Esophagus muscularis mucosa (tissue), 4 donors: ENCODE measurements at regions of chrX and their contacts with region 1.

Region 1: GRCh38 chrX:41259516-41259915 is 74.4 kb upstream of the DDX3X start:
- DNase-seq: no peak
- H3K4me3 ChIP-seq: no peak overlapping the region
- H3K27ac ChIP-seq: no peak overlapping the region
- H3K4me1 ChIP-seq: no peaks in the 10 kb centered on the region
- H3K27me3 ChIP-seq: peaks cover 0 to 6% (median 0%) of the 10 kb centered on the region in 4 donors
- CTCF ChIP-seq: no peak
- EP300 ChIP-seq: no peak
- POLR2A ChIP-seq: no peak

Region 2: GRCh38 chrX:41180194-41180908 is 79.2 kb before region 1 on chrX:
- intact Hi-C with region 1: loop called (anchors 10 kb)
- DNase-seq: no peak
- H3K4me3 ChIP-seq: no peak overlapping the region
- H3K27ac ChIP-seq: no peak overlapping the region
- H3K4me1 ChIP-seq: peaks cover 0 to 11% (median 7%) of the 10 kb centered on the region in 4 donors
- H3K27me3 ChIP-seq: no peaks in the 10 kb centered on the region
- CTCF ChIP-seq: peak; percentile 57 to 65 (median 64)
- EP300 ChIP-seq: no peak
- POLR2A ChIP-seq: no peak